Posterior vena cava (tissue), 2 donors: ENCODE measurements at regions of chr3 and their contacts with region 1.

Region 1: GRCh38 chr3:84965141-84965540 is 6.4 kb downstream of the CADM2 start:
- DNase-seq: no peak

Region 2: DNA sequence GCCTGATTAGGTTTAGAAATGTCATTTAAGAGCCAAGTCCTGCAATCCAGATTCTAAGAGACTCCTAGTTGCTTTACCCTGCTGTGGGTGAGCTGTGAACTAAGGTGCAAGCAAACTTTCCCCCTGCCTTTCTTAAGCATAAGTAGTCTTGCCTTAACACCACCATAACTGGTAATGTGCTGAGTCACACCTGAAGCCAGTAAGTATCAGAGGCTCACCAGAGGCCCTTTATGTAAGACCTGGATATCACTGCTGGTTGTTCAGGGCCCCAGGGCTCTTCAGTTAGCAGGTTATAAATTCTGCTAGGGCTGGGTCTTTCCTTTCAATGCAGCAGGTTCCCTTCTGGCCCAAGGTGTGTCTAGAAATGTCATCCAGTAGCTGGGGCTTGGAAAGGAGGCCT is 1515.9 kb after region 1 on chr3:
- intact Hi-C with region 1: loop called in 1 of 2 experiments (anchors 10 kb)
- DNase-seq: no peak